ENCODE measurements at regions of chr14 and their contacts with region 1.

Region 1: DNA sequence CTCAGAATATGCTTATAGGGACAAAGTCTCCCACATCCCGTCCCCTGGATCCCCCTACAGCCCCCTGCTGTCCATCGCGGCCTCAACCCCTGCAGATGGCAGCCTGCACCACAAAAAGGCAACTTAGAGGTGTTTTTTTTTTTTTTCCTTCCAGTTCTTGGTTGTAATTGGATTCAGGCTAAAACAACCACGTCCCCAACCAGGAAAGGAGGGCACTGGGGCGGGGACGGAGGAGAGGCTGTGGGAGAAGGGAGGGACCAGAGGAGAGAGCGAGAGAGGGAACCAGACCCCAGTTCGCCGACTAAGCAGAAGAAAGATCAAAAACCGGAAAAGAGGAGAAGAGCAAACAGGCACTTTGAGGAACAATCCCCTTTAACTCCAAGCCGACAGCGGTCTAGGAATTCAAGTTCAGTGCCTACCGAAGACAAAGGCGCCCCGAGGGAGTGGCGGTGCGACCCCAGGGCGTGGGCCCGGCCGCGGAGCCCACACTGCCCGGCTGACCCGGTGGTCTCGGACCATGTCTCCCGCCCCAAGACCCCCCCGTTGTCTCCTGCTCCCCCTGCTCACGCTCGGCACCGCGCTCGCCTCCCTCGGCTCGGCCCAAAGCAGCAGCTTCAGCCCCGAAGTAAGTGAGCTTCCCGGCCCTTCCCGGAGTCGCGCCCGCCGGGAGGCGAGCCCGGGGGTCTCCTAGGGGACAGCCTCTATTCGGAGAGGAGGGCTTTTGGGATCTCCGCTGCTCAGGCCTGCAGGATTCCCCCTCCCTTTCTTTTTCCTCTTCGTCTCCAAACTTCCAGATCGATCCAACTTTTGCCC is at the start of gene MMP14:
- DNase-seq: no peak
- ATAC-seq: no peak
- H3K4me3 Mint-ChIP-seq: peak within 1 kb of the TSS; percentile 63
- H3K27ac Mint-ChIP-seq: peak within 1 kb of the TSS; percentile 17
- H3K4me1 Mint-ChIP-seq: peaks cover 15% of the 10 kb centered on the region
- H3K27me3 Mint-ChIP-seq: peaks cover 13% of the 10 kb centered on the region
- total RNA-seq, gene MMP14: 2.0 to 2.1 TPM

Region 2: GRCh38 chr14:22549981-22550673 is 286.4 kb before region 1 on chr14:
- CTCF ChIA-PET with region 1: no interaction called
- POLR2A ChIA-PET with region 1: no interaction called
- intact Hi-C with region 1: no loop called
- DNase-seq: peak; percentile 84
- ATAC-seq: peak; percentile 63
- H3K4me3 Mint-ChIP-seq: peak overlapping the region; percentile 71
- H3K27ac Mint-ChIP-seq: peak overlapping the region; percentile 99
- H3K4me1 Mint-ChIP-seq: peaks cover 94% of the 10 kb centered on the region
- H3K27me3 Mint-ChIP-seq: no peaks in the 10 kb centered on the region

Region 3: DNA sequence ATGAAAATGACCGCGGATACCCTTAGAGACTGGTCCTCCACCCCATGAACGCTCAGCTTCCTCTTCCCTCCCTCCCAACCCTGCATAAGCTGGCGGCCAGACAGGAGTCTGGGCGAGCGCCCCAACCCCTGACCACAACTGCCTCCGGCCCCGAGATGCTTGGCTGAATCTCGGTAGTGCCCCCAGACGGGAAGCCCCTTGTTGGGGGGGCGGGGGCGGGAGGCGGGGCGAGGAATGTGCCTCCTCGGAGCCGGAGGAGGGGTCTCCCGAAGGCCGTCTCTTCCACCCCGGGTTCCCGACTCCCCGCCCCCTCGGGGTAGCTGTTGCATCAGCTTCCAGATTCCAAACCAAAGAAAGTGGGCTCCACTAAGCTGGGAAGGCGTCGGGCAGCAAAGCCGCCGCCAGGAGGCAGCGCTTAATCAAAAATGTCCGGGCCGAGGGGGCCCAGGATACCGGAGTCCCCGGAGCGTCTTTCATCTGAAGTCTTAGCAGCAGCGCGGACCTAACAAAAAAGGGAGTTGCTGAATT is 13.9 kb before region 1 on chr14:
- CTCF ChIA-PET with region 1: interaction called, 28 read pairs
- POLR2A ChIA-PET with region 1: interaction called, 4 read pairs
- intact Hi-C with region 1: no loop called
- DNase-seq: peak; percentile 80
- ATAC-seq: peak; percentile 75
- H3K4me3 Mint-ChIP-seq: peak overlapping the region; percentile 55
- H3K27ac Mint-ChIP-seq: peak overlapping the region; percentile 25
- H3K4me1 Mint-ChIP-seq: peaks cover 27% of the 10 kb centered on the region
- H3K27me3 Mint-ChIP-seq: peaks cover 5% of the 10 kb centered on the region

Measured in activated CD4-positive, alpha-beta T cell treated with anti-CD3 and anti-CD28 coated beads for 36 hours (primary cell).